Spleen (tissue), 13 donors: ENCODE measurements at regions of chr4 and their contacts with region 1.

Region 1: DNA sequence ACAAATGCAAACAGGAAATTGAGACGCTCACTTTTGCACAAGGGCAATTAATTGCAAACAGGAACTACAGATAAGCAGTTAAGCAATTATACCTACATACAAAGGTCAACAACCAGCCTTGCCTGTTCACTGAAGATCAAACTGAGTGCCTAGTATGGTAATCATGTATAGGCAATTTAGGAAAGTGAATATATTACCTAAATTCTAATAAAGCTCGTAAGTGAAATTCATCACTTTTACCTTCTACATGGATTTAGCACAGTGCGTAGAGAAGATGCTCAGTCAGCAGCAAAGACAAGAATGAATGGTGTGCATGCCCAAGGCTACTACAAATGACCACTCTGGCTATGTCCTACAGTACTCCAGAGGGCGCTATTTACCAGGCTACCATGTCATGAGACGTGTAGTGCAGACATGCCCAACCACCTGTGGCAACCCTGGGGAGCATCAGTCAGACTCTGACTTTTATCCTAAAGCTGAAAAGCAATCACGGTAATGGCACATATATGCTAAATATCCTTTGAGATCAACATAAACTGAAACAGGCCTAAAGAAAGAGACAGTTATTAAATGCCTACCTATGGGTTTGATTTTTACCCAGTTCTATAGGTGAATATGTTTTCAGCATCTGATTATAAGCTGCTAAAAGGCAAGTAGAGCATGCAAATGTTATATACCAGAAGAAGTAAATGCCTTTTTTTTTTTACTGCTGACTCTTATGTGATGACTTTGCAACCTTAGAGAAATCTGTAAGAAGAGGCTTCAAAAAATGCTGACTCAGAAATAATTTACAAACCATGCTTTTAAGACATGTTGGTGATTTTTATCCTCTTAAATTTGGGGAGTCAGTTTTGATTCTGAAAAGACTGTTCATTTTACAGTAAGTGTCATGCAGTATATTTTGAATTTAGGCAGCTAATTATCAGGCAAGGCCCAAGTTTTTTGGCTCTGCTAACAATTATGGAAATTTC is 178.0 kb downstream of the PPP3CA start:
- DNase-seq: peak; percentile 75
- H3K4me3 ChIP-seq: no peak overlapping the region
- H3K27ac ChIP-seq: peak overlapping the region in 1 of 8 donors; percentile 24
- H3K4me1 ChIP-seq: peaks cover 4 to 22% (median 16%) of the 10 kb centered on the region in 6 donors
- H3K27me3 ChIP-seq: no peaks in the 10 kb centered on the region
- CTCF ChIP-seq: peak; percentile 49 to 85 (median 75)
- POLR2A ChIP-seq: no peak

Region 2: GRCh38 chr4:100949350-100949935 is 219.9 kb before region 1 on chr4:
- intact Hi-C with region 1: no loop called
- DNase-seq: no peak
- H3K4me3 ChIP-seq: no peak overlapping the region
- H3K27ac ChIP-seq: no peak overlapping the region
- H3K4me1 ChIP-seq: no peaks in the 10 kb centered on the region
- H3K27me3 ChIP-seq: no peaks in the 10 kb centered on the region
- CTCF ChIP-seq: no peak
- POLR2A ChIP-seq: no peak

Region 3: DNA sequence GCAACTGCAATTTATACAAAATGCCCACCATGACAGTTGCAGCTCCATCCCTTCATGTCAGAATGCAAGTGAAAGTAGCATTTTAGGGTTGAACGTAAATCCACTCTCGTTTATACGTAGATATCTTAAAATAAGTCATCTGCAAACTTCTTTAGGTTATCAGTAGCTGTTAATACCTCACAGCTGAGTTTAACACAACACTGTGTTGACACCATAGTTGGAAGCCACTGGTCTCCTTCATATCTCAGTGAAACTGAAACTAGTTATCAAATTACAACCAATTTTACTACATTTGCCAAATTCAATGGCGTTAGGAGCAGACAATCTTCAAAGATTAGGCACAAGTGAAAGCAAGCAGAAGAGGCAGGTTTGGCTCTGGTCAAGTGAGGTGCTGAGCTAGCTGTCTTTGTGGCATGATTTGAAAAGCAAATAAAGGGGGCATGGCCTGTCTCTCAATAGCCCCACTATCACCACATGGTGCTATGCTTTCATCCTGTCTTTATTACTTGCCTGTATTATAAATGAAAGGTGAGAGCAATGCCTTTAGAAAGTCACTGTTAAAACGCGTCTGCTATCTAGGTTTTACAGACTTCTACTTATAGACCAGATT is 165.7 kb after region 1 on chr4:
- intact Hi-C with region 1: no loop called
- DNase-seq: no peak
- H3K4me3 ChIP-seq: no peak overlapping the region
- H3K27ac ChIP-seq: peak overlapping the region in 1 of 8 donors; percentile 18
- H3K4me1 ChIP-seq: peaks cover 12 to 79% (median 31%) of the 10 kb centered on the region in 6 donors
- H3K27me3 ChIP-seq: no peaks in the 10 kb centered on the region
- CTCF ChIP-seq: no peak
- POLR2A ChIP-seq: no peak

Region 4: DNA sequence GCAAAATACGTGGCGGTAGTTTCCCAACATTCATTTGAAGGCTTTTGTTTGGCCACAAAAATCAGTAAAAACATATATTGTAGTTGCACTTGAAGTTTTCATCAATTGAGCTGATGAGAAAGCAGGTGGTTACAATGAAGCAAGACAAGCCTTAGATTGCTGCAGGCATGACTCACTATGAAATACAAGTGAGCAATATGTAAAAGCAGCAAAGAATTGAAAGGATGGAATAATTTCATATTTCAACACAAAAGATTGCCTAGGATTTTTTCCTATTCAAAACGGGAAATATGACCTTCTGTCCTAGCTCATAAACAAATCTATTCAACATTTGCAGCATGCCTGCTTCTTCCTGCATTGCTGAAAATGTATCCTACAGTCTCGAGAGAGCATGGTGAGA is 430.3 kb after region 1 on chr4:
- intact Hi-C with region 1: loop called (anchors 10 kb)
- DNase-seq: no peak
- H3K4me3 ChIP-seq: no peak overlapping the region
- H3K27ac ChIP-seq: no peak overlapping the region
- H3K4me1 ChIP-seq: peaks cover 0 to 13% (median 4%) of the 10 kb centered on the region in 6 donors
- H3K27me3 ChIP-seq: peaks cover 0 to 5% (median 0%) of the 10 kb centered on the region in 7 donors
- CTCF ChIP-seq: no peak
- POLR2A ChIP-seq: no peak

Region 5: DNA sequence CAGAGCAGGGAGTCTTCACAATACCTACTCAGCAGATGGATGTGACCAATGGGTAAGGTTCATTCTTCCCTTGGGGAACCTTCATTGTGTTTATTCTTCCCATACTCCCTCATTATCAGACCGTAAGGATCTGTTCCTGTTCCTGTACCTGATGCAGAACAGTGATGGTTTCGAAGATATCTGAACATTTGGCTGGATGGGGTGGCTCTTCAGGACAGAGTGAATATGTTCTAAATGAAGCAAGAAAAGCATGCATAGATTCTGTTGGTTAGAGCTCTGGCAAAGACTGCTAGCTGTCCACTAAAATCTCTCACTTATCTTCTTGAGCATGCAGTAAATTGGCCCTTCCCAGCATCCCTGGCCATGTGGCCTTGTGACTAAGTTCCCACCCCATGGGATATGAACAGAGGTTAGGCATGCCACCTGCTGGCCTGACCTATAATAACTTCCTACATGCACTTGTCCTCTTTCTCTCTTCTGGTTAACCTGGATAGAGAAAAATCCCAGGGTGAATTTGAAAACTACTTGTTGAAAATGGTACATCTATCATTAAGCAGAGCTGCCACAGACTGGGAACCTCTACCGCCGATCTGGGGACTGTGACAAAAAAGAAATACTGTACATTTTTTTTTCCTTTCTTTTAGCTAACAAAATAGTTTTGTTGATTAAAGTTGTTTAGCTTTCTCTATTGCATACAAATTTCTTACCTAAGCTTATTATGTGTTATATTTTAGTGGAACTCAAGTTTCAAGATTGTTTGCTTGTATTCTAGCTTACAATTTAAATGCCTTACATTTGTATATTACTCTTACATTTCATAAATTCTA is 561.2 kb after region 1 on chr4:
- intact Hi-C with region 1: loop called (anchors 5 kb)
- DNase-seq: peak; percentile 75
- H3K4me3 ChIP-seq: no peak overlapping the region
- H3K27ac ChIP-seq: no peak overlapping the region
- H3K4me1 ChIP-seq: no peaks in the 10 kb centered on the region
- H3K27me3 ChIP-seq: no peaks in the 10 kb centered on the region
- CTCF ChIP-seq: peak; percentile 39 to 70 (median 58)
- POLR2A ChIP-seq: no peak

Region 6: DNA sequence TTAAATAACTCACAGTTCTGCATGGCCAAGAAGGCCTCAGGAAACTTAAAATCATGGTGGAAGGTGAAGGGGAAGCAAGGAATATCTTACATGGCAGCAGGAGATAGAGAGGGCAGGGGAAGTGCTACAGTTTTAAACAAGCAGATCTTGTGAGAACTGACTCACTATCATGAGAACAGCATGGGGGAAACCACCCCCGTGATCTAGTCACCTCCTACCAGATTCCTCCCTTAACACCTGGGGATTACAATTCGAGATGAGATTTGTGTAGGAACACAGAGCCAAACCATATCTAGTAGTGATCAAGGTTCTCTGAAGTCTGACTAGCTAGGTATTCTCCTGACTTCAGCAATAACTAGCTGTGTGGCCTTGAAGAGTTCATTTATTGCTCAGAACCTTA is 677.2 kb after region 1 on chr4:
- intact Hi-C with region 1: no loop called
- DNase-seq: no peak
- H3K4me3 ChIP-seq: no peak overlapping the region
- H3K27ac ChIP-seq: peak overlapping the region in 1 of 8 donors; percentile 40
- H3K4me1 ChIP-seq: peaks cover 0 to 50% (median 9%) of the 10 kb centered on the region in 6 donors
- H3K27me3 ChIP-seq: no peaks in the 10 kb centered on the region
- CTCF ChIP-seq: no peak
- POLR2A ChIP-seq: no peak